Psoas muscle (tissue), 8 donors: ENCODE measurements at regions of chr14 and their contacts with region 1.

Region 1: GRCh38 chr14:71753126-71753830 is 179.0 kb upstream of the RGS6 start:
- DNase-seq: peak; percentile 82 to 89
- ATAC-seq: peak; percentile 61 to 89 (median 66)
- H3K4me3 ChIP-seq: no peak overlapping the region
- H3K27ac ChIP-seq: no peak overlapping the region
- H3K4me1 ChIP-seq: no peaks in the 10 kb centered on the region
- H3K27me3 ChIP-seq: no peaks in the 10 kb centered on the region
- CTCF ChIP-seq: peak; percentile 85

Region 2: DNA sequence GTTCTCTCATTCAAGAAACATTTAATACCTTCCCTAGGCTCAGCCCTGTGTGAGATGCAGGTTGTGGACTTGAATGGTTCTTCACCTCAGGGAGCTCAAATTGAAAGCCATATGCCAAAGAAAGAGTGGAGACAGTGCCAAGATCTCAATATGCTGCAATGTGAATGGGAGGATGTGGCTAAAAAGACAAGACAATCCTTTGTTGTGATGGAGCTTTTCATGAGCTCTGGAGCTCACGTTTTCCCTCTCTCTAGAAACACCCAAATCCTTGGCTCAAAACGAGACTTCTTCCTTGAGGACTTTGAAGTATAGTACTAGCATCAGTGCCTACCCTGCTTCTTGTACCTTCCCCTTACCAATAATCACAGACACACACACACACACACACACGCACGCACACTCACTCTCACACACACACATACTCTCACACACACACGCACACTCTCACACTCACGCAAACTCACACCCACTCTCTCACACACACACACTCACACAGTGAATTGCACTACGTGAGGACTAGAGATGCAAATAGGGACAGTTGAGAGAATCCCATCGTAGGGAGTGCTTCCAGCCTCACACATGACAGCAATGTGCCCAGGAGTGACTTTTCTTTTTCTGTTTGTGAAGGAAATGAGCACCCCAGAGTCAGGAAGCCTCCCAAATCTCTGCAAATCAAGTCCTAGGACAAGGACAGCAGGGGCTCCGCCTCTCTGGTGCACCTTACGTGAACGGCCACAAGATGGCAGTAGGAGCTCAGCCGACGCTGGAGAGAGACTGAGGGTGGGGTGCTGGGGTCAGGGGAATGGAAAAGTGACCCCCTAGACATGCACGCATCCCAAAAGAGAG is 614.6 kb before region 1 on chr14:
- intact Hi-C with region 1: loop called (anchors 1 kb)
- DNase-seq: peak; percentile 25 to 65
- ATAC-seq: peak in 3 of 4 donors; percentile 63 to 81 (median 75)
- H3K4me3 ChIP-seq: no peak overlapping the region
- H3K27ac ChIP-seq: no peak overlapping the region
- H3K4me1 ChIP-seq: no peaks in the 10 kb centered on the region
- H3K27me3 ChIP-seq: no peaks in the 10 kb centered on the region
- CTCF ChIP-seq: peak; percentile 86

Region 3: DNA sequence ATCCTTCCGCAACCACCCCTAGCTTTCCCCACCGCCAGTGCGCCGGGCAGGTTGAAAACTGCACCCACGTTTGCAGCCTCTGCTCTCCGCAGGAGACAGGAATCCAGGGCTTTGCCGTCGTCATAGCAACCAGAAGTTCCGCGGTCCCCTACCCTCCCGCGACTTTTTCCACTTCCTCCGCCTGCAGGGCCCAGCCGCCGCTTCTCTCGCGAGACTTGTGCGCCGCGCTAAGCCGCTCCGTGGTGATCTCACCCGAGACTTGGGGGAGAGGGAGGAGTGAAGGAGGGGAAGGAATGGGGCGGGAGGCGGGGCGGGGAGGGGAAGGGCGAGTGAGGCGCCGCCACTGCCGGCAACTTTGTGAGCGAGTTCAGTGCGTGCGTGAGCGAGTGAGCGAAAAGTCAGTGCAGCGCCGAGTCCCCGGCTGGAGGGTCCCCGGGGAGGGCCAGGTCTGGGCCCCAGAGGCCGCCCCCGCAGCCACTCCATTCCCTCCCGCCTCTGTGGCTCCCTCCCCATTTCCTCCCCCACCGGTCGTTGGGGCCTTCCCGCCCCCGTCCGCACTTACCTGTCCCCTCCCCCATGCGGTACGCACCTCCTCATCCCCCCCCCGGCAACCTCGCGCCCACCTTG is 433.1 kb before region 1 on chr14:
- intact Hi-C with region 1: loop called in 1 of 2 experiments (anchors 10 kb)
- DNase-seq: peak; percentile 96 to 98
- ATAC-seq: peak; percentile 97 to 98 (median 98)
- H3K4me3 ChIP-seq: peak within 1 kb of the TSS; percentile 95
- H3K27ac ChIP-seq: peak within 1 kb of the TSS; percentile 82
- H3K4me1 ChIP-seq: no peaks in the 10 kb centered on the region
- H3K27me3 ChIP-seq: peaks cover 0 to 3% (median 0%) of the 10 kb centered on the region in 3 donors
- CTCF ChIP-seq: no peak

Region 4: GRCh38 chr14:71675126-71675899 is 78.0 kb before region 1 on chr14:
- intact Hi-C with region 1: no loop called
- DNase-seq: no peak
- ATAC-seq: no peak
- H3K4me3 ChIP-seq: no peak overlapping the region
- H3K27ac ChIP-seq: no peak overlapping the region
- H3K4me1 ChIP-seq: no peaks in the 10 kb centered on the region
- H3K27me3 ChIP-seq: no peaks in the 10 kb centered on the region
- CTCF ChIP-seq: no peak

Region 5: DNA sequence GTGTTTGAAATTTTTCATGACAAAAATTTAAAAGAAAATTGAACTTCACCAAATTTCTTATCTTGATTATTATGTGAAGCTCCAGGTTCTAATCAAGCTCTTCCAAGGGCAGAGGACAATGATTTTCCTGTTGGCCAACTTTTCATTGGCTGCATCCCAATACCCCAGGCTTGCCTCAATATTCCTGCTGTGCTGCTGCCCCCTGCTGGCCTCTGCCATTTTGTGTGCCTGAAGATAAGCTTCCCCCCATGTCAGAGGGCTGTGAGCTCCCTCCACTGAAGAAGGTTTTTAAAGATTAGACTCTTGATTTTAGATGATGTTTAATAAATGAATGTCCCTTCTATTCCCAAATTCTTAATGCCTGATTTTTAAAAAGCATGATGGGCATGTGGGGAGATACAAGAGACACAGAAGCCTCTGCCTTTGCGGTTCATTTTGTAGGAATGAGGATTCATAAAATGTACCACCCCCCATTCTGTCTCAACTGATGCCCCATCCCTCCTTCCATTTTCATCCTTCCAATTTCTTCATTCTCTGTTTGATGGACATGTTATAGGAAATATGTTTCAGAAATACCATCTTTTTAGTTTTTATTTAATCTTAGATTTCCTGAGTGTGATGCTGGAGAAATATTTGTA is 102.2 kb after region 1 on chr14:
- intact Hi-C with region 1: loop called in 1 of 2 experiments (anchors 5 kb)
- DNase-seq: peak; percentile 63 to 68
- ATAC-seq: no peak
- H3K4me3 ChIP-seq: no peak overlapping the region
- H3K27ac ChIP-seq: no peak overlapping the region
- H3K4me1 ChIP-seq: no peaks in the 10 kb centered on the region
- H3K27me3 ChIP-seq: peaks cover 0 to 2% (median 0%) of the 10 kb centered on the region in 3 donors
- CTCF ChIP-seq: peak; percentile 48

Region 6: DNA sequence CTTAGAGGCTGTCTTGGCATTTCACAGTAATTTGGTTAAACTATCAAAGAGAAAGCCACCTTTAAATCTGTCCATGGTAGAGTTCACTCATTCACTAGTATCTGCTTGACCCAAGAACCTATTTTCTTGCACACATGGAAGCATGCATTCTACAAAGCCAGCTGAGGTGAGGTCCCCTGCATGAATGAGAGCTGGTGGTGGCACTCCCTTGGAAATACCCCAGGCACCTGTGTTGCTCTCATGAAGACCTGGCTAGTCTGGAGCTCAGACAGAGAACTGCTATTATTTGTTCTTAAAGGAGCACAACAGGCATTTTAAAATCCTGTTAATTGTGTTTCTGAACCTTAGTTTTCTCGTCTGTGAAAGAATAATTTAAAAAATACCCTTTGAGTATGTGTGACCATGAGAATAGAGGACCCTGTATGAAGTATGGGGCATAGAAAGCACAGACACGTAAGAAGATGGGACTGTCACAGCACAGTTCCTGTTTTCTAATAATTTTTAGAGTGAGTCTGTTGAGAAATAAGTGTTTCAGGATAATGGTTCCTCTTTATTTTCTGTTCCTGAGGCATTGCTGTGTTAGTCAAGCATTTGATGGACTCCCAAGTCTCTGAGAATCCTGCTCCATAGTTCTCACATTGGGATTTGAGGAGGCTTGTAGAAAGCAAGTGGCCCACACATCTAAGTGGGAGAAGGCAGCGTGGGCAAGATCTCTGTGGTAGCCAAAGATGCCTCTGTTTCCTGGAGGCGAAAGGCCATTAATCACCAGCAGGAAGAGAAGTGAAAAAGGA is 189.8 kb after region 1 on chr14:
- intact Hi-C with region 1: no loop called
- DNase-seq: no peak
- ATAC-seq: no peak
- H3K4me3 ChIP-seq: no peak overlapping the region
- H3K27ac ChIP-seq: no peak overlapping the region
- H3K4me1 ChIP-seq: no peaks in the 10 kb centered on the region
- H3K27me3 ChIP-seq: no peaks in the 10 kb centered on the region
- CTCF ChIP-seq: no peak